ENCODE measurements at regions of chr12 and their contacts with region 1.

Region 1: DNA sequence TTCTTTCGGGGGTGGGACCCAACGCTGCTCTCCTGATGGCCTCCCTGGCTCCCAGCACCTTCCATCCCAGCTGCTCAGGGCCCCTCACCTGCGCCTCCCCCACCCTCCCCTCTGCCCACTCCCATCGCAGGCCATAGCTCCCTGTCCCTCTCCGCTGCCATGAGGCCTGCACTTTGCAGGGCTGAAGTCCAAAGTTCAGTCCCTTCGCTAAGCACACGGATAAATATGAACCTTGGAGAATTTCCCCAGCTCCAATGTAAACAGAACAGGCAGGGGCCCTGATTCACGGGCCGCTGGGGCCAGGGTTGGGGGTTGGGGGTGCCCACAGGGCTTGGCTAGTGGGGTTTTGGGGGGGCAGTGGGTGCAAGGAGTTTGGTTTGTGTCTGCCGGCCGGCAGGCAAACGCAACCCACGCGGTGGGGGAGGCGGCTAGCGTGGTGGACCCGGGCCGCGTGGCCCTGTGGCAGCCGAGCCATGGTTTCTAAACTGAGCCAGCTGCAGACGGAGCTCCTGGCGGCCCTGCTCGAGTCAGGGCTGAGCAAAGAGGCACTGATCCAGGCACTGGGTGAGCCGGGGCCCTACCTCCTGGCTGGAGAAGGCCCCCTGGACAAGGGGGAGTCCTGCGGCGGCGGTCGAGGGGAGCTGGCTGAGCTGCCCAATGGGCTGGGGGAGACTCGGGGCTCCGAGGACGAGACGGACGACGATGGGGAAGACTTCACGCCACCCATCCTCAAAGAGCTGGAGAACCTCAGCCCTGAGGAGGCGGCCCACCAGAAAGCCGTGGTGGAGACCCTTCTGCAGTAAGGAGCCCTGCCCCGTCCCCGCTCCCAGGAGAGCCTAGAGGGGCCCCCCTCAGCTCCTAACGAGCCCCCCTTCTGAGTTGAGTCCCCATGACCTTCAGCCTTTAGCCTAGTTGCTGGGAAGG is at the start of gene HNF1A:
- DNase-seq: peak; percentile 83 to 93
- H3K4me3 ChIP-seq: peak within 1 kb of the TSS; percentile 87
- H3K4me3 Mint-ChIP-seq: peak within 1 kb of the TSS; percentile 88
- H3K27ac Mint-ChIP-seq: peak within 1 kb of the TSS; percentile 71
- H3K4me1 ChIP-seq: peaks cover 49% of the 10 kb centered on the region
- H3K4me1 Mint-ChIP-seq: peaks cover 30% of the 10 kb centered on the region
- H3K27me3 ChIP-seq: no peaks in the 10 kb centered on the region
- H3K27me3 Mint-ChIP-seq: no peaks in the 10 kb centered on the region
- CTCF ChIP-seq: no peak
- total RNA-seq, gene HNF1A: 37.1 and 41.2 TPM in 2 replicates

Region 2: GRCh38 chr12:120892265-120892664 is 86.3 kb before region 1 on chr12:
- CTCF ChIA-PET with region 1: no interaction called
- POLR2A ChIA-PET with region 1: no interaction called
- intact Hi-C with region 1: no loop called
- DNase-seq: no peak
- H3K4me3 ChIP-seq: no peak overlapping the region
- H3K4me3 Mint-ChIP-seq: no peak overlapping the region
- H3K27ac Mint-ChIP-seq: no peak overlapping the region
- H3K4me1 ChIP-seq: peaks cover 10% of the 10 kb centered on the region; the same call in 1 of the 2 replicates
- H3K4me1 Mint-ChIP-seq: peaks cover 15% of the 10 kb centered on the region
- H3K27me3 ChIP-seq: no peaks in the 10 kb centered on the region
- H3K27me3 Mint-ChIP-seq: no peaks in the 10 kb centered on the region
- CTCF ChIP-seq: no peak

Region 3: DNA sequence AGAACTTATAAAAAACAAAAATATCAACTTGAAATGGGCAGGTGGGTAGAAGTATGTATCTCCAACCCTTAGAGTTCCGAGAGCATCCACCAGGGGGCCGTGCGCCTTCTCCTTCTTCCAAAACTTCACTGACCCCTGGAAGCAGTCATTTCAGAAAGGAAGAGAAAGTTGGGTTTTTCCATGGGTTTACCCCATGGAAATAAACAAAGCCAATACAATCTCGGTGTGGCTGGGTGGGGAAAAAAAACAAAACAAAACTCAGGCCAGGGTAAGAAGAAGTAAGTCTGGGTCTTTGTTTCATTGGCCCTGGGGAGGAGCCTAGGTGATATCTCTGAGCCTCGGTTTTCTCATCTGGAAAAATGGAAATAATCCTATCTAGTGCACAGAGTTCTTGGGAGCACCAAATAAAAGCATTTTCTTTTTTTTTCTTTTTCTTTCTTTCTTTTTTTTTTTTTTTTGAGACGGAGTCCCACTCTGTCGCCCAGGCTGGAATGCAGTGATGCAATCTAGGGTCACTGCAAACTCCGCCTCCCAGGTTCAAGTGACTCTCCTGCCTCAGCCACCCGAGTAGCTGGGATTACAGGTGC is 33.8 kb before region 1 on chr12:
- CTCF ChIA-PET with region 1: interaction called, 15 read pairs
- POLR2A ChIA-PET with region 1: no interaction called
- intact Hi-C with region 1: loop called (anchors 2 kb)
- DNase-seq: peak; percentile 69 to 83
- H3K4me3 ChIP-seq: no peak overlapping the region
- H3K4me3 Mint-ChIP-seq: peak overlapping the region; percentile 6
- H3K27ac Mint-ChIP-seq: peak overlapping the region; percentile 40
- H3K4me1 ChIP-seq: peaks cover 11% of the 10 kb centered on the region
- H3K4me1 Mint-ChIP-seq: peaks cover 6% of the 10 kb centered on the region
- H3K27me3 ChIP-seq: no peaks in the 10 kb centered on the region
- H3K27me3 Mint-ChIP-seq: no peaks in the 10 kb centered on the region
- CTCF ChIP-seq: peak; percentile 81 to 87

Region 4: DNA sequence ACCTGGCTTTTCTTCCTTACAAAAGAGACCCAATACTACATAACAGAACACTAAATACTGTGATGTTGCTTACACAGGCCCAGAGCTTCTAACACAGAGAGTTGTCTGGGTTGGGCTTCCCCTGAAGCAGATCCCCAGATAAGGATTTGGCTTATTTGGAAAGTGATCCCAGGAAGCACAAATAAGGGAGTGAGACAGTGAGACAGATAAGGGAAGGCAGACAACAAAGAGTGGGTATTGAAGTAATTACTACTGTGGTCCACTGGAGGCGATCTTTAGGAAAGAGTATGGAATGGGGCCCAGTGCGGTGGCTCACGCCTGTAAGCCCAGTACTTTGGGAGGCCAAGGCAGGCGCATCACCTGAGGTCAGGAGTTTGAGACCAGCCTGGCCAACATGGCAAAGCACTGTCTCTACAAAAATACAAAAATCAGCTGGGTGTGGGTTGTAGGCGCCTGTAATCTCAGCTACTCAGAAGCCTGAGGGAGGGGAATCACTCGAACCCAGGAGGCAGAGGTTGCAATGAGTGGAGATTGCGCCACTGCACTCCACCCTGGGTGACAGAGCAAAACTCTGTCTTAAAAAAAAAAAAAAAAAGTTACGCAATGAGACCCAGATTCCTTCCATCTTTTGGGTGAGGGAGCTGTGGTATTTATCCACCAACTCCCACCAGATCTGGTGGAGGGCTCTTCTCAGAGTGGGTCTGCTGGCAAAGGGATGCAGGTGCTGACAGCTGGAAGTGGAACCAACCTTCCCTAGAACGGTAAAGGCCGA is 47.9 kb after region 1 on chr12:
- CTCF ChIA-PET with region 1: no interaction called
- POLR2A ChIA-PET with region 1: no interaction called
- intact Hi-C with region 1: no loop called
- DNase-seq: peak in 1 of 2 experiments; percentile 59
- H3K4me3 ChIP-seq: no peak overlapping the region
- H3K4me3 Mint-ChIP-seq: peak overlapping the region; percentile 61
- H3K27ac Mint-ChIP-seq: peak overlapping the region; percentile 90
- H3K4me1 ChIP-seq: peaks cover 33% of the 10 kb centered on the region
- H3K4me1 Mint-ChIP-seq: peaks cover 10% of the 10 kb centered on the region
- H3K27me3 ChIP-seq: no peaks in the 10 kb centered on the region
- H3K27me3 Mint-ChIP-seq: no peaks in the 10 kb centered on the region
- CTCF ChIP-seq: peak; percentile 24 to 45

Region 5: DNA sequence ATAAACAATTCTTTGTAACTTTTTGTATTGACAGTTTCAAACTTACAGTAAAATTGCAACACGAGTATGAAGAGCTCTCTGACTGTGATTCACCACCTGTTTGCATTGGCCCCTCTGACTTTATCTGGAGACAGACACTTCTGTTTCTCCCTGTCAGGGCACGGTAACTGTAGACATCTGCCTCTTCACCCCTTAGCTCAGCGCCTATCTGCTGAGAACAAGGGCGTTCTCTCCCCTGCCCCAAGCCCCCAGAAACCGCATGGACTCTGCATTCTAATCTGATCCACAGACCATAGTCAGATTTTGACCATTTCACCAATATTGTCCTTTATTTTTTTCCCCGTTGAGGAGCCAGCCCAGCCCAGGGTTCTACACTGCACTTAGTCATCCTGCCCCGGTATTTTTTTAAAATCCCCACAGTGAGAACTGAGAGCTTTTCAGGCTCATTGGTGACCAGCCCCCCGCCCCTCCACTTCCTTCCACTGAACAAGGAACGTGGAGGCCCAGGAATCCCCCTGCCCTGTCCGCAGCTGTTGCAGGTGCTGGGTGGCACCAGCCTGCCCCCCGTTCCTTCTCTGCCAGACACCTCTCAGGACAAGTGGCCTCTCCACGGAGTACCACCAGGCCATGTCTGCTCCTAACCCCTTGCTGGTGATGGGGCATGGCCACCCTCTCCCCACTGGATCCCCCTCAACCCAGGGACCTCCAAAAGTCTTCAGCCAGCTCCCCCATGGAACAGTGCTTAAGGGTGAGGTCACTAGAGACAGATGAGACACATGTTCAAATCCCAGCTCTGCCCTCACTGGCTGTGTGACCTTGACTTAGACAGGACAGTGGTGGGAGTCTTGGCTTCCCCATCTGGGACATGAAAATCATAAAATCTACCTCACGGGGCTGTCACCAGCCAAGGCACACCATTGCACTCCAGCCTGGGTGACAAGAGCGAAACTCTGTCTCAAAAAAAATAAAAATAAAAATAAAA is 803.7 kb after region 1 on chr12:
- CTCF ChIA-PET with region 1: interaction called, 3 read pairs
- POLR2A ChIA-PET with region 1: interaction called, 15 read pairs
- intact Hi-C with region 1: no loop called
- DNase-seq: no peak
- H3K4me3 ChIP-seq: no peak overlapping the region
- H3K4me3 Mint-ChIP-seq: no peak overlapping the region
- H3K27ac Mint-ChIP-seq: peak overlapping the region; percentile 3
- H3K4me1 ChIP-seq: peaks cover 10% of the 10 kb centered on the region
- H3K4me1 Mint-ChIP-seq: peaks cover 24% of the 10 kb centered on the region
- H3K27me3 ChIP-seq: no peaks in the 10 kb centered on the region
- H3K27me3 Mint-ChIP-seq: no peaks in the 10 kb centered on the region
- CTCF ChIP-seq: no peak